ENCODE measurements at regions of chr3 and their contacts with region 1.

Region 1: DNA sequence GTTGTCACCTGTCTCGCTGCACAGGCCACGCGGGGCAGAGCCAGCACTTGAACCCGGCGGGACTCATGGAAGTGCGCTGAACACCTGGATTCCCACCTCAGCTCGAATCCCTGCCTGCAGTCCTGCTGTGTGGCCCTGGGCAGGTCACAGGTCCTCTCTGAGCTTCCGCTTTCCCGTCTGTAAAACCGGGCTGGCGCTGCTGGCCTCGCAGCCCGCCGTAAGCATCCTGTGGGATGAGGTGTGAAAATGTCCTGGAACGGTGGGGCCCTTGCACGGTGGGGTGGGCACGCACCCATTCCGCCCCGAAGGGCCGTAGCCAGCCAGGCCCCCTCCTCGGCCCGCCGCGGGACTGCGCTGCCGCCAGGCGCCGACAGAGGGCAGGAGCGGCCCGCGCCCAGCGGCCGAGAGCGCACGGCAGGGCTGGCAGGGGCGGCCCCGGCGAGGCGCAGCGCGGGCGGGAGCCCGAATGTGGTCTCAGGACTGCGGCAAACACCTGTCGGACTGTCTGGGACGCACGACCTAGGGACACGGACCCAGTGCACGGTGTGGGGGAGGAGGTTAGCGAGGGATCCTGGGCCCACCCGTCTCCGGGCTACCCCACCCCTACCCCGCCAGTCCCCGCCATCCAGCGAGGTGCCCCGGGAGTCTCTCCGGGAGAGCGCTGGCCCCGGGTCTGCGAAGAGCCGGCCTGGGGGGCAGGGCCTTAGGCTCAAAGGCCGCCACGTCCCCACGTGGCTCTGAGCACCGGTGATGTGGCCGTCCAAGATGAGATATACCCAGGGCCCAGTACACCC is 40.4 kb downstream of the DNAJB8 start:
- DNase-seq: peak; percentile 61
- H3K4me3 Mint-ChIP-seq: no peak overlapping the region
- H3K27ac Mint-ChIP-seq: no peak overlapping the region
- H3K4me1 Mint-ChIP-seq: no peaks in the 10 kb centered on the region
- H3K27me3 Mint-ChIP-seq: peaks cover 17% of the 10 kb centered on the region

Region 2: DNA sequence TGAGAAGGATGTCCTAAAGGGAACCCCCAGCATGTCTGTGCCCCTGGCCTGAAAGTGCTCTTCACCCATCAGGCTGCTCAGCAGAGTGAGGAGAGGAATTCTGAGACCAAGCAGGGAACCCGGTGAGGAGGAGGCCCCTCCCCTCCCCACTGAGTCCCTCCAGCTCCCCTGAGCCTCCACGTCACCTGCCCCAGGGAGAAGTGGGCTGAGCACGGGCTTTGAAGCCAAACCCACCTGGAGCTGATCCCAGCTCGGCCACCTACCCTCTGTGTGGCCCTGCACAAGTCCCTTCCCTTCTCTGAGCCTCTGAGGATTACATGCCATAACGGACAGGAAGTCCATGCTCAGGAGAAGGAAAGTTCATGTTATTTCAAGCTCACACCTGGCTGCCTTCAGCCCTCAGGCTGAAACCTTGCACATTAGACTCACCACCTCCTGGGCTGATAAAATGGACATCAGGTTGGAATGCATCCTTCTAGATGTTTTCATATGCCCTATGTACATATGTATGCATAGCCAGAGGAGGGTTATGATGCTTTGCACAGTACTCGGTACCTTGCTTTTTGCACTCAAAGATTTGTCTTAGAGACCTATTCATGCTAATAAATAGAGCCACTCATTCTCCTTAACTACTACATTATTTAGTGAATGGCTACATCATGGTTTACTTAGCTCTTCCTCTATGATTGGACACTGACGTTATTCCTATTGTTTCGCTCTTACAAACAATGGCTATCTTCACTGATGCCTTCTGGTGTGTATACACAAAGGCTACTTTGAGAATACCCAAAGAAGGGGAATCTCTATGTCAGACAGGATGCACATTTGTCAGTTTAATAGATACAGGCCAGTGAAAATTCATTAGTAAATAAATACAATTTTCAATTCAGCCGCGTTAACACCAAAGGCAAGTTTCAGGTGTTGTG is 98.3 kb after region 1 on chr3:
- CTCF ChIA-PET with region 1: no interaction called
- POLR2A ChIA-PET with region 1: no interaction called
- DNase-seq: no peak
- H3K4me3 Mint-ChIP-seq: no peak overlapping the region
- H3K27ac Mint-ChIP-seq: no peak overlapping the region
- H3K4me1 Mint-ChIP-seq: no peaks in the 10 kb centered on the region
- H3K27me3 Mint-ChIP-seq: peaks cover 32% of the 10 kb centered on the region

Region 3: DNA sequence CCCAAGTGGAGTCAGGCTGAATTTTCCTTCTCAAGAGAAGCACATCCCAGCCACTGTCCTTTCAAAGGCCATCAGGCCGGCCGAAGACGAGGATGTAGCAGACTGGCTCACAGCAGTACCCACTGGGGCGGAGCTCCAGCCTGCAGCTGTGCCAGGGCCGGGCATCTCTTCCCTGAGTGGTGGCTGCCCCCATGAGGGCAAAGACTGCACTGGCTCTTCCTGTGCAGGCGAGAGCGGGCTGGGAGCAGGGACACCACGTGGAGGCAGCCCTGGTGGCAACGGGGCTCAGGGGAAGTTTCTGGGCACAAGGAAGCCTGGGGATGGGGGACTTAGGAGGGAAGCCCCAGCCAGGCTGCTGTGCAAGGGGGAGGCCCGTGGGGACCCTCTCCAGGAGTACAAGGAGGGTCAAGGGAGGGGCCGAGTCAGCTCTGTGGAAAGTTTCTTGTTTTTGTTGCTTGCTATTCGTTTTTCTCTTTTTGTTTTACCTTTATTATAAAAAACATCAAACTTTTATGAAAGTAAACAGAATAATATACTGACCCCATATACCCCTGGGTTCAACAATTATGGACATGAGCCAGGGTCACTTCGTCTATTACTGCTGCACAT is 158.2 kb after region 1 on chr3:
- CTCF ChIA-PET with region 1: interaction called, 19 read pairs
- POLR2A ChIA-PET with region 1: no interaction called
- DNase-seq: peak; percentile 50
- H3K4me3 Mint-ChIP-seq: no peak overlapping the region
- H3K27ac Mint-ChIP-seq: no peak overlapping the region
- H3K4me1 Mint-ChIP-seq: peaks cover 6% of the 10 kb centered on the region
- H3K27me3 Mint-ChIP-seq: peaks cover 15% of the 10 kb centered on the region

Region 4: GRCh38 chr3:128607710-128608048 is 181.4 kb after region 1 on chr3:
- CTCF ChIA-PET with region 1: interaction called, 11 read pairs
- POLR2A ChIA-PET with region 1: no interaction called
- DNase-seq: no peak
- H3K4me3 Mint-ChIP-seq: no peak overlapping the region
- H3K27ac Mint-ChIP-seq: no peak overlapping the region
- H3K4me1 Mint-ChIP-seq: peaks cover 2% of the 10 kb centered on the region
- H3K27me3 Mint-ChIP-seq: peaks cover 2% of the 10 kb centered on the region